ENCODE measurements at regions of chr18 and their contacts with region 1.

Region 1: DNA sequence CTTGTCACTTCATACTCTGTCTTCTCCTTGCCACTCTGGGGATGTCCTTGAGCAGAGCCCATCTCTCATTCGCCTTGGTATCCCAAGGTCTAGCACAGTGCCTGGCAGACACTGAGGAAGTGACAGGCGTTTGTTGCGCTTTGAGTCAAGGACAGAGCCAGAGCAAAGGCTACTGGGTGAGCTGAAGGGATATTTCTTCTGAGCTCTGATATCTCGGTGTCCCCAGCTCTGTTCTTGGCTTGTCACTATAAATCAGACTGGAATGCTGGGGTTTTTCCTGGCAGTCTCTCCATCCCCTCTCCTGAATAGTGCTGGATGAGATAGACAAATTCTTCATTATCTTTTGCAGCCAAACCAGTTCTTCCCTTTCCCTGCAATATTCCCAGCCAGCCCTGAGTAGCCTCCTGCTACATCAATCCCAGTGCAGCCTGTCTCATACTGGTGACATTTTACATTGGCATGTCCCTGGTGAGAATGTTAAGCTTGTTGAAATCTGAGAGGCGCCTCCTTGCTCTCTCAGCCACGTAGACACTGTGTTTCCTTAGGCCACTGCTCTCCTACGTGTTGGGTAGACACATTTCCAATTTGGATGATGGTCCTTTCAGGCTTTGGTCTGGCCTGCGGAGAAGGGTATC is 61.7 kb downstream of the CTIF start:
- DNase-seq: no peak

Region 2: DNA sequence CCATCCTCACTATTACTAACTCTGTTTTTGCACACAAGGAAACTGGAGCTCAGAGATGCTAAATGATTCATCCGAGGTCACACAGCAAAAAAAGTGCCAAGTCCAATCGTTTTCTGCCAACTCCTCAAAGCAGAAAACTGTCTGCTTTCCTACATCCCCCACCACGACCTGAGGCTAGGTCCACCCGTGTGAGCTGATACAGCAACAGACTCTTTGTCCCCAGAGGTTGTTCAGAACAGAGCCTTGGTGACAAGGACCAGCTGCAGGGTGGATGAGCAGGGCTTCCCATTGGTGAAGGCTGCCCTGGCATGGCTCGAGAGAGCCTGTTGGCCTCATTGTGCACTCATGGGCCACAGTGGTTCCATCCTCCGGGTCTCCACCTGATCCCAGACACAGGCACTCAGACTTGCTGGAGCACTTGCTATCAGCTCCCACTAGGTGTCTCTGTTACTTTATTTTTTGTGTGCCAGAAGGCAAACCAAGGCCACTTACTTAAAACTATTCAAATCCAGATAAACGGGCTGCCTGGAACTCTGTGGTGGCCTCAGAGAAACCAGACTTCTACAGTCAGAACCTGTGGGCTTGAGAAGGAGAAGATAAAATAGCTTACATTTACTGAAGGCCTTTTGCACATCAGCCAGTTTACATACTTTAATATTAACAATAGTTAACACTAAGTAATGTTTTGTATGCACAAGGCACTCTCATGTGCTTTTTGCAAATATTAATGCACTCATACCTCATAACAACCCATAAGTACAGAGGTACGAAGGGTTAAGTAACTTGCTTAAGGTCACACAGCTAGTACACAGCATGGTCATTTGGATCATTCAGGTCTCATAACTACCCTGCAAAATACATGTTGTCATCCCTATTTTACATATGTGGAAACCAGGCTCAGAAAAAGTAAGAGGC is 124.7 kb before region 1 on chr18:
- intact Hi-C with region 1: loop called (anchors 5 kb)
- DNase-seq: no peak

Region 3: GRCh38 chr18:48955830-48956261 is 355.3 kb after region 1 on chr18:
- intact Hi-C with region 1: no loop called
- DNase-seq: peak; percentile 87